ENCODE measurements at regions of chr2 and their contacts with region 1.

Region 1: DNA sequence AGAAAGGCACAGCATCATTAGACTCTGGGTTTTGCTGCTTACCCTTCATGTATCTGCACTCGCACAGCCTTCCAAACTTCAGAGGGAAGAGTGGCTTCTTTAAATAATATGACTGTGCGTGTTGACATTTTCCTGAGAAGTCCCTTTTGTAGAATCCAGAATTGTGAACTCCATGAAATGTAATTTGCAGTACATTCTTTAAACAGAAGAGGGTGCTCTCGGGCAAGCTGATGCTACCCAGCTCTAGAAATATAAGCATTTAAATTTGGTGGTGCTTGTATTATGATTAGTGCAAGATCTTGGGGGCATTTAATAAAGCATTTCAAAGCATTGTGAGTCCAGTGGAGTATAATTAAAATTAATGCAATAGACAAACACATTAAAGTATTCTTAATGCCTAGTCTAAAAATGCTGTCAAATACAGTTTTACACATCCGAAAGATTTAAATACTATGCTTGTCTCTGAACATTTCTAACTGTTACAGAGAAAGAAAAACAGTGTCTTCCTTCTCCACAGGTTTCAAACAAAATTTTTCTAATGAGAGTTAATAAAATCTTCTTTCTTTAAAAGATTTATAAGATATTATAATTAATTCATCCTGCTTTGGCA is 17.3 kb upstream of the GTF2A1L start:
- DNase-seq: peak in 2 of 4 donors; percentile 49 to 59
- ATAC-seq: peak; percentile 88
- H3K4me3 ChIP-seq: no peak overlapping the region
- H3K27ac ChIP-seq: no peak overlapping the region
- H3K4me1 ChIP-seq: no peaks in the 10 kb centered on the region
- H3K27me3 ChIP-seq: no peaks in the 10 kb centered on the region
- CTCF ChIP-seq: peak; percentile 48 to 68

Region 2: GRCh38 chr2:48398285-48399002 is 201.9 kb before region 1 on chr2:
- intact Hi-C with region 1: no loop called
- DNase-seq: no peak
- ATAC-seq: no peak
- H3K4me3 ChIP-seq: no peak overlapping the region
- H3K27ac ChIP-seq: no peak overlapping the region
- H3K4me1 ChIP-seq: peaks cover 0 to 8% of the 10 kb centered on the region in 2 donors
- H3K27me3 ChIP-seq: no peaks in the 10 kb centered on the region
- CTCF ChIP-seq: no peak

Region 3: DNA sequence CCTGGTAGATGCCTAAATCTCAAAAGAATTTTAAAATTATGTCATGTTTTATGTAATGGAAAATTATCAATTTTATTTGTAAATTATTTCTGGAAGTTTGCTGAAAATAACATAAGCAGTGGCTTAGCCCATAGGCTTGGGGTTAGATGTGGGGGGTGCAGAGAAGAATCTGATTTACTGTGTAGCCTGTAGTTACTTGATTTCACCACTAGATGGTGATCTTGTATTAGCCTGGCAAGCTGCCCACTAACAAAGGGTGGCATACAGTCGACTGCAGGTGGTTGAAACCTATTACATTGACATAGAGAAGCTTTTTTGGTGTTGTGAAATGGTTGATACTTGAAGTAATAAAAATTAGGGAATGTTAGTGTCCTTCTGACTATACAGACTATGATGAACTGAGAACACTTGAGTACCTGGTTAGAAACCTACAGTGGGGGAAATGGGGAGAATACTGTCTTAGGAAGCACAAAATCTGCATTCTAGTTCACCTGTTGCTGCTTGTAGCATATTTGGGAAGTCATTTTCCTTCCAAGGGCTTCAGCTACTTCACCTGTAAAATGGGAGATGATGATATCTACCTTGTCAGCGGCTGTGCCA is 346.2 kb after region 1 on chr2:
- intact Hi-C with region 1: loop called in 1 of 2 experiments (anchors 10 kb)
- DNase-seq: peak in 2 of 4 donors; percentile 43 to 62
- ATAC-seq: peak; percentile 96
- H3K4me3 ChIP-seq: no peak overlapping the region
- H3K27ac ChIP-seq: no peak overlapping the region
- H3K4me1 ChIP-seq: no peaks in the 10 kb centered on the region
- H3K27me3 ChIP-seq: no peaks in the 10 kb centered on the region
- CTCF ChIP-seq: peak; percentile 74 to 94

Measured in left lung (tissue), 14 donors.